Heart right ventricle (tissue), 16 donors: ENCODE measurements at regions of chr22 and their contacts with region 1.

Region 1: DNA sequence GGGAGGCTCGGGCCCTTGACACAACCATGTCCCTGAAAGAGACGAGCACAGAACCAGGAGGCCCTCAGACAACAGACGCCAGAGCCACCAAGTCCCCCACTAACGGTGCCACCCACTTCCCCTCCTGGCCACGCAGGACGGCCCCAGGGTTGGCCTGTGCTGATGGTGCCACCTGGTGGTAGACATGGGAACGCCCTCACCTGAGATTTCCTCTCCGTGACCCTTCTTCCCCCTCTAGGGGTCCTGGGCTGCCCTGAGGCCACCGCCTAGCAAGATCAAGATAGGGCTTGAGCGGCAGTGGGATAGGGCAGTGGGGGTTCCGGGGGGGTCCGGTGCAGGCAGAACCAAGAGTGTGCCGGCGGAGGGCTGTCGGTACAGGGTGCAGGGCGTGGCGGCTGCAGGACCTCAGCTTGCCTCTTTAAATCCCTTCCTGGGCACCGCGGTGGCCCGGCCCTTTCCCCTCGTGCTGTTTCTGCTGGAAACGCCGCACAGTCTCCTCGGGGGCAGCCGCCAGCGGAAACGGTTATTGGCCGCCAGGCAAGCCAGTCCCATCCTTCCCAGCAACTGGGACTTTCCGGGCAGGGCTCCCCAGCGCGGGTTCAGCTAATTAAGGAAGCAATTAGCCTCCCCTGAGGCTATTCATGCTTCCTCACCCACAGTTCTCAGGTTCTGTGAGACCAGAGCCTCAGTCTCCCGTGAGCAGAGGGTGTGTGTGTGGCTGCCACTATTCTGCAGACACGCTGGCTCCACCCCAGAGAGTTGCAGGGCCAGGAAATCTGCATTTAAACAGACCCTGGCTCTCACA is 5.5 kb upstream of the NFAM1 start:
- DNase-seq: peak; percentile 76 to 79
- ATAC-seq: peak; percentile 73 to 86 (median 84)
- H3K4me3 ChIP-seq: peak overlapping the region; percentile 10 to 55 (median 48)
- H3K27ac ChIP-seq: peak overlapping the region in 4 of 10 donors; percentile 9 to 80 (median 32)
- H3K4me1 ChIP-seq: peaks cover 4 to 73% (median 28%) of the 10 kb centered on the region in 9 donors
- H3K27me3 ChIP-seq: peaks cover 0 to 55% (median 17%) of the 10 kb centered on the region in 7 donors
- CTCF ChIP-seq: peak; percentile 92 to 98 (median 97)

Region 2: GRCh38 chr22:41966607-41967240 is 471.0 kb before region 1 on chr22:
- intact Hi-C with region 1: loop called in 9 of 10 experiments (anchors 5 to 10 kb)
- DNase-seq: no peak
- ATAC-seq: peak; percentile 16 to 58 (median 40)
- H3K4me3 ChIP-seq: no peak overlapping the region
- H3K27ac ChIP-seq: no peak overlapping the region
- H3K4me1 ChIP-seq: no peaks in the 10 kb centered on the region
- H3K27me3 ChIP-seq: peaks cover 0 to 19% (median 8%) of the 10 kb centered on the region in 7 donors
- CTCF ChIP-seq: peak in 8 of 9 donors; percentile 22 to 56 (median 37)

Region 3: GRCh38 chr22:42090596-42091454 is 346.9 kb before region 1 on chr22 and contains the start of gene NDUFA6:
- intact Hi-C with region 1: loop called in 9 of 10 experiments (anchors 2 to 10 kb)
- DNase-seq: peak; percentile 98 to 99
- ATAC-seq: peak; percentile 97 to 99 (median 98)
- H3K4me3 ChIP-seq: peak within 1 kb of the TSS; percentile 68 to 100 (median 89)
- H3K27ac ChIP-seq: peak within 1 kb of the TSS; percentile 95 to 100 (median 98)
- H3K4me1 ChIP-seq: peaks cover 8 to 46% (median 40%) of the 10 kb centered on the region in 9 donors
- H3K27me3 ChIP-seq: no peaks in the 10 kb centered on the region
- CTCF ChIP-seq: peak; percentile 81 to 99 (median 95)
- total RNA-seq, gene NDUFA6: 179 to 344 (median 265) TPM

Region 4: GRCh38 chr22:42169055-42169469 is 268.6 kb before region 1 on chr22:
- intact Hi-C with region 1: loop called (anchors 1 to 5 kb)
- DNase-seq: peak; percentile 55 to 74
- ATAC-seq: peak; percentile 63 to 89 (median 82)
- H3K4me3 ChIP-seq: no peak overlapping the region
- H3K27ac ChIP-seq: no peak overlapping the region
- H3K4me1 ChIP-seq: peaks cover 0 to 9% (median 0%) of the 10 kb centered on the region in 9 donors
- H3K27me3 ChIP-seq: no peaks in the 10 kb centered on the region
- CTCF ChIP-seq: peak; percentile 73 to 96 (median 90)

Region 5: GRCh38 chr22:42270512-42271417 is 166.9 kb before region 1 on chr22 and contains the start of gene TCF20:
- intact Hi-C with region 1: loop called in 4 of 10 experiments (anchors 5 to 10 kb)
- DNase-seq: peak; percentile 81 to 84
- ATAC-seq: peak; percentile 55 to 90 (median 85)
- H3K4me3 ChIP-seq: peak within 1 kb of the TSS; percentile 68 to 100 (median 98)
- H3K27ac ChIP-seq: peak within 1 kb of the TSS; percentile 46 to 91 (median 82)
- H3K4me1 ChIP-seq: peaks cover 6 to 29% (median 17%) of the 10 kb centered on the region in 9 donors
- H3K27me3 ChIP-seq: no peaks in the 10 kb centered on the region
- CTCF ChIP-seq: peak in 1 of 9 donors; percentile 14
- total RNA-seq, gene TCF20: 11.6 to 18.8 (median 15.3) TPM

Region 6: DNA sequence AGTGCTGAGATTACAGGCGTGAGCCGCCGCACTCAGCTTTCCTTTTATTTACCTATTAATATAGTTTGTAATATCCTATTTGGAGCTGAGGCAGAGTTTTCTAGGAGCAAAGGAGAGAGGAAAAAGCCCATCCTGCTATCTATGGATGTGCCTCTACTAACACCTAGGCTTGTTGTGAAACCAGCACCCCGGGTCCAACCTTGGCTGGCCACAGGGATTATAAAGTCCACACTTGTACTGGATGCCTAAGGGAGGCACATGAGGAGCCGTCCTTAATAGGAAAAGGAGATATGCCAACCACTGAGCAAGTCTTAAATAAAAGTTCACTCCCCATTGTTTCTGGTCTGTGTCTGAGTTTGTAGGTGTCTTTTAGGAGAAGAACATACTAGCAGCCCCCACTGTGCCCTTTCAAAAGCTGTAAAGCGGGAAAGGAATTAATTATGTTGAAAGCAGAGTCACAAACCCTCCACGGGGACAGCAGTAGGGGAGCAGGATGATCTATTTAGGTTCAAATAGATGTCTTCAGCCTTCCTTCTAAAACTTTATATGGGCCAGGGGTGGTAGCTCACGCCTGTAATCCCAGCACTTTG is 52.6 kb after region 1 on chr22:
- intact Hi-C with region 1: no loop called
- DNase-seq: no peak
- ATAC-seq: no peak
- H3K4me3 ChIP-seq: no peak overlapping the region
- H3K27ac ChIP-seq: no peak overlapping the region
- H3K4me1 ChIP-seq: no peaks in the 10 kb centered on the region
- H3K27me3 ChIP-seq: peaks cover 0 to under 1% (median 0%) of the 10 kb centered on the region in 7 donors
- CTCF ChIP-seq: no peak